HepG2 (cell line): ENCODE measurements at regions of chr1 and their contacts with region 1.

Region 1: GRCh38 chr1:172532700-172533509 is at the start of gene SUCO:
- DNase-seq: peak; percentile 96
- ATAC-seq: peak; percentile 95
- H3K4me3 ChIP-seq: peak within 1 kb of the TSS; percentile 90 to 98 (median 91)
- H3K27ac ChIP-seq: peak within 1 kb of the TSS; percentile 95
- H3K4me1 ChIP-seq: peaks cover 53% of the 10 kb centered on the region
- H3K27me3 ChIP-seq: no peaks in the 10 kb centered on the region; a peak in 1 of 5 replicates
- CTCF ChIP-seq: peak; percentile 20; the same call in 1 of the 2 replicates
- EP300 ChIP-seq: peak in 1 of 2 experiments; percentile 11; a peak in 1 of 4 replicates
- POLR2A ChIP-seq: peak; percentile 82 to 87
- RAD21 ChIP-seq: peak; percentile 77
- total RNA-seq, gene SUCO: 17.0 and 25.5 TPM in 2 replicates

Region 2: DNA sequence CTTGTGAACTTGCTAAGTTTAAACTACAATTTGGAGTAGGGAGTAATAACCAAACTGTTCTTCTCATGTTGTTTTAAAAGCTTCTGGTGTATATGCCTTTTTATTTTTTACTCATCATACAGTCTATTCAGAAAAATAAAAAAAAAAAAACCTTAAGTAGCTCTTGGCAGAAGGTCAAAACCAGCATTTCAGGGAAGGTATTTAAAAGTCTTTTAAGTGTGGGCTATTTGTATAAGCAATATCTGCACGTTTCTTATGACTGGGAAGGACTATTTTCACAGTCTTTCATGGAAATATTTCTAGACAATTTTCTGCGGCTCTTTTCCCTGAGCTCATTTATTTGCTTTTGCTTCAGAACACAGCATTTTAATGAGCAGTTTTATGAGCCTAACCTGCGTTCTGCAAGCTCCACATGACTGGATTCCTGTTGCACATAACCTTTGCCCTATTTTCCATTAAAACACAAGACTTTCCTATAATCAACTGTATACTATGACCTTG is 173.4 kb before region 1 on chr1:
- CTCF ChIA-PET with region 1: no interaction called
- POLR2A ChIA-PET with region 1: no interaction called
- in situ Hi-C with region 1: no loop called
- intact Hi-C with region 1: no loop called
- DNase-seq: peak; percentile 39
- ATAC-seq: no peak
- H3K4me3 ChIP-seq: no peak overlapping the region
- H3K27ac ChIP-seq: no peak overlapping the region
- H3K4me1 ChIP-seq: peaks cover 34% of the 10 kb centered on the region
- H3K27me3 ChIP-seq: 0 out of 5 replicates have a peak, but pooled peaks cover 0 to 2% of the 10 kb centered on the region in 2 experiments
- CTCF ChIP-seq: no peak
- EP300 ChIP-seq: no peak
- POLR2A ChIP-seq: no peak
- RAD21 ChIP-seq: no peak

Region 3: DNA sequence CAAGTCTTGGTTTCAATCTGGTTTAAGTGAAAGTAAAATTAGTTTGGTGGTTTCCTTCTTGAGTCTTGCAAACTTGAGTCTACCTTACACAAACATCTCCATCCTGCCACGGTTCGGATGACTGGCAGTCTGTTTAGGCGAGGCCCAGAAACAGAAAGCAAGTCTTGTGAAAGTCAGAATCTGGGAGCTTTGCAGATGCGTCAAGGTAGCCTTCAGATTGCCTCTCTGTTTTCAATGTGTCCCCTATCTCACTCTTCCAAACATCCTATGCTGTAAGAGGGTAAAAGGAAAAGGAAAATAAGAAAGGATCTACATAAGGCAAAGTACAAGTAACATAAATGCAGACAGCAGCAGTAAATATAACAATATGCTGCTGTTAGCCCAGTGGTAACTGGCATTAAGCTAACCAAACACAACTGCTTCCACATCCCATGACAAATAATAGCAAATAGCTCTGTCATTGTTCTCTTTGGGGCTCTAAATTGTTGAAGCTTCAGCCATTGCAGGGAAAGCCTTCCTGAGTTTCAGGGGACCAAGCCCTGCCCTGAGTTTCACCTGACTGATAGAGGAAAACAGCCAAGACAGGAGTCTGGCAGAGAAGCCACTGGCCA is 138.7 kb before region 1 on chr1:
- CTCF ChIA-PET with region 1: no interaction called
- POLR2A ChIA-PET with region 1: no interaction called
- in situ Hi-C with region 1: no loop called
- intact Hi-C with region 1: no loop called
- DNase-seq: peak; percentile 4
- ATAC-seq: no peak
- H3K4me3 ChIP-seq: no peak overlapping the region
- H3K27ac ChIP-seq: no peak overlapping the region
- H3K4me1 ChIP-seq: peaks cover 28% of the 10 kb centered on the region
- H3K27me3 ChIP-seq: no peaks in the 10 kb centered on the region; a peak in 1 of 5 replicates
- CTCF ChIP-seq: no peak
- EP300 ChIP-seq: no peak
- POLR2A ChIP-seq: no peak
- RAD21 ChIP-seq: no peak

Region 4: GRCh38 chr1:172449585-172450534 is 83.0 kb before region 1 on chr1:
- CTCF ChIA-PET with region 1: interaction called, 7 read pairs
- POLR2A ChIA-PET with region 1: interaction called, 96 read pairs
- in situ Hi-C with region 1: no loop called
- intact Hi-C with region 1: loop called (anchors 1 kb)
- DNase-seq: peak; percentile 85
- ATAC-seq: peak; percentile 85
- H3K4me3 ChIP-seq: peak overlapping the region; percentile 65 to 85 (median 70)
- H3K27ac ChIP-seq: peak overlapping the region; percentile 84
- H3K4me1 ChIP-seq: peaks cover 65% of the 10 kb centered on the region
- H3K27me3 ChIP-seq: no peaks in the 10 kb centered on the region; a peak in 1 of 5 replicates
- CTCF ChIP-seq: peak; percentile 90
- EP300 ChIP-seq: no peak
- POLR2A ChIP-seq: peak; percentile 54 to 76
- RAD21 ChIP-seq: peak; percentile 94

Region 5: DNA sequence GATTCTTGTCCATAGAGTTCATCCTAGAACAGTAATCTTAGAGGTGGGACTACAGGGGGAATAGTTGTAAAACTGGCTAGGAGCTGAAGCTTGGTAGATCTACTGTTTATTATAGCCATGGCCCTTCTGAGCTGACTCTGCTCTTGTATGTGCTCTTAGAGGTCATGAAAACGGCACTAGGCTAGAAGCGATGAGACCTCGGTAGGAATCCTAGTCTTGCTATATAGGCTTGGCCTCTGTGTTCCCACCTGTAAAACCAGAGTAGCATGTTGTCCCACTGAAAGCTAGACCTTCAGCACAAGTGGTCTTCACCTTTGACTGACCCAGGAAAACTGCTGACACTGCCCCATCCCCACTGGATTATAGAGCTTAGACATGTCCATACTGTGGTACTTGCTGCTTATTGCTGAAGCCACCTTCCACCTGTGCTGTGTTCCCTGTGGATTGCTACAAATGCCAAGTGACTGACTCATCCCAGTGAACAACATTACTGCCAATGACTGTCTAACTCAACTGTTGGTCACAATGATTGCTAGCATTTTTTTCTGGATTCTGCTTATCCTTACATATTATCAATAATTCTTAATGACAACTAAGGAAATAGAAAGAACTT is 66.0 kb before region 1 on chr1:
- CTCF ChIA-PET with region 1: no interaction called
- POLR2A ChIA-PET with region 1: interaction called, 25 read pairs
- in situ Hi-C with region 1: loop called (anchors 5 kb)
- intact Hi-C with region 1: loop called (anchors 1 kb)
- DNase-seq: peak; percentile 53
- ATAC-seq: peak; percentile 68
- H3K4me3 ChIP-seq: no peak overlapping the region
- H3K27ac ChIP-seq: no peak overlapping the region
- H3K4me1 ChIP-seq: peaks cover 60% of the 10 kb centered on the region
- H3K27me3 ChIP-seq: no peaks in the 10 kb centered on the region
- CTCF ChIP-seq: no peak
- EP300 ChIP-seq: 0 out of 4 replicates have a peak, but pooled peaks of 1 of the 2 experiments have one; percentile 7
- POLR2A ChIP-seq: no peak
- RAD21 ChIP-seq: no peak

Region 6: GRCh38 chr1:172497230-172497629 is 35.7 kb before region 1 on chr1:
- CTCF ChIA-PET with region 1: no interaction called
- POLR2A ChIA-PET with region 1: interaction called, 21 read pairs
- in situ Hi-C with region 1: no loop called
- intact Hi-C with region 1: loop called (anchors 2 kb)
- DNase-seq: peak; percentile 52
- ATAC-seq: peak; percentile 56
- H3K4me3 ChIP-seq: peak overlapping the region in 2 of 3 experiments; percentile 8 to 27; a peak in 1 of 6 replicates
- H3K27ac ChIP-seq: no peak overlapping the region
- H3K4me1 ChIP-seq: peaks cover 77% of the 10 kb centered on the region
- H3K27me3 ChIP-seq: no peaks in the 10 kb centered on the region
- CTCF ChIP-seq: no peak
- EP300 ChIP-seq: no peak
- POLR2A ChIP-seq: no peak
- RAD21 ChIP-seq: no peak

Region 7: GRCh38 chr1:172545396-172546004 is 12.6 kb after region 1 on chr1:
- CTCF ChIA-PET with region 1: no interaction called
- POLR2A ChIA-PET with region 1: interaction called, 11 read pairs
- in situ Hi-C with region 1: no loop called
- intact Hi-C with region 1: no loop called
- DNase-seq: no peak
- ATAC-seq: no peak
- H3K4me3 ChIP-seq: no peak overlapping the region
- H3K27ac ChIP-seq: no peak overlapping the region
- H3K4me1 ChIP-seq: peaks cover 26% of the 10 kb centered on the region; the same call in 1 of the 2 replicates
- H3K27me3 ChIP-seq: no peaks in the 10 kb centered on the region
- CTCF ChIP-seq: no peak
- EP300 ChIP-seq: no peak
- POLR2A ChIP-seq: no peak
- RAD21 ChIP-seq: no peak